ENCODE measurements at regions of chr11 and their contacts with region 1.

Region 1: DNA sequence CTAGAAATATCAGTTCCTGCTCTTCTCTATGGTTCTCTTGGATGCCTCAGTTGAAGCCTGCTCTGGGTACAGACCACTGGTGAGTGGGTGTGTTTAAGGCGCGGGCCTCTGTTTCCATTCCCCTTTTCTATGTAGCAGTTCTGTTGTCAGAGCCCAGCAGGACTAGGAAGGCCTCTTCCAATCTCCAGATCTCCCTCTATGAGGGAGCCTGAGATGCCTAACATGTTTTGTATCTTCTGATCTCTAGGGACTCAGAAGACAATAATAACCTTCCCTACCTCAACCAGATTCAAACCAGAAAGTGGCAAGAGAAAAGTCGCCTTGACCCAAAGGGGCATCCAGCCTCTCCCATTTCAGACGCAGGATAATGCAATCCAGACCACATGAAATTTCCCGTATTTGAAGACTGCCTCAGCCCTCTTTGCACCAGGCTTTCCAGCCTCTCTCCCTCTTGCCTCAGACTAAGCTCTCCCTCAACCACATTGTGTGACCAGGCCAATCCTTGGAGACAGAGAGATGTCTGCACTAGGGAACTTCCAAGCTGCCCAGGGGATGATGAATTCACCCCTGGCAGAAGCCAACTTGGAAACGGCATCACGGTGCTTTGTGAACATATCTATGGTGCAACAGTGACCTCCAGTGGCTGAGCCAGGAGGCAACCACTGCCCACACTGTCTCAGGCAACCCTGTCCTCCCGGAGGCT is 150.1 kb upstream of the UBASH3B start:
- DNase-seq: peak; percentile 83
- H3K4me3 Mint-ChIP-seq: no peak overlapping the region
- H3K27ac Mint-ChIP-seq: no peak overlapping the region
- H3K4me1 Mint-ChIP-seq: peaks cover 2% of the 10 kb centered on the region
- H3K27me3 Mint-ChIP-seq: peaks cover 16% of the 10 kb centered on the region

Region 2: GRCh38 chr11:122202951-122203456 is 302.5 kb before region 1 on chr11:
- intact Hi-C with region 1: no loop called
- DNase-seq: peak; percentile 80
- H3K4me3 Mint-ChIP-seq: no peak overlapping the region
- H3K27ac Mint-ChIP-seq: no peak overlapping the region
- H3K4me1 Mint-ChIP-seq: peaks cover 3% of the 10 kb centered on the region
- H3K27me3 Mint-ChIP-seq: peaks cover 16% of the 10 kb centered on the region

Region 3: DNA sequence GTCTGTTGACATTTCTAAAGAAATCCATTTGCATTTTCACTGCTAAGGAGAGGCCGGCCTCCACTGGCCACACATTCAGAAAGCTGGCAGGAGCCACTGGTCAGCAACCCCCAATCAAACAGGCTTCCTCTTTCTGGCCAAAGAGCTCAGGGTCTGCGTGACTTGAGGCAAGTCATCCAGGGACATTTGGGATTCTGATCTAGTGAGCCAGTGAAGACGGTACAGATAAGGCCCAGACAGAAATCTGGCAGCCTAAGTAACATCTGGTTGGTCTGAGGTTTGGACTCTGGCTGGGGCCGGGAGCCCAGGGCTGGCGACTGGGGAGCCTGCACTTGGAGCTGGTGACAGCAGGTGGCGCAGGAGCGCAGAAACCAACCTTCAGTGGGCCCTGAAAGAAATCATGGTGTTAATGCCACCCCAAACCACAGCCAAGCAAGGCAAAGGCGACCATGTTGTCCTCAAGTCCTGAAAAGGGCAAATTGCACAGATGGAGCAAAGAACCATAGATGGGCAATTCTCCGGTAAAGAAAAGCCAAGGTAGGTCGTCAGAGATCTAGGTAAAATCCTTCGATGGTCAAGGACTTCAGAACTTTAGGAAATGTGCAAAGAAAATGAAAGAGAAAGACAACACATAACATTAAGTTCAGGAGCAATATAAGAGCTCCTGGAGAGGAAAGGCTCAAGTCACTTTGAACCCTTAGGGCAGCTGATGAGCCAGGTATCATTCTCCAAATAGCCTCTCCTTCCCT is 290.0 kb before region 1 on chr11:
- intact Hi-C with region 1: loop called (anchors 1 kb)
- DNase-seq: peak; percentile 73
- H3K4me3 Mint-ChIP-seq: no peak overlapping the region
- H3K27ac Mint-ChIP-seq: no peak overlapping the region
- H3K4me1 Mint-ChIP-seq: no peaks in the 10 kb centered on the region
- H3K27me3 Mint-ChIP-seq: no peaks in the 10 kb centered on the region

Region 4: DNA sequence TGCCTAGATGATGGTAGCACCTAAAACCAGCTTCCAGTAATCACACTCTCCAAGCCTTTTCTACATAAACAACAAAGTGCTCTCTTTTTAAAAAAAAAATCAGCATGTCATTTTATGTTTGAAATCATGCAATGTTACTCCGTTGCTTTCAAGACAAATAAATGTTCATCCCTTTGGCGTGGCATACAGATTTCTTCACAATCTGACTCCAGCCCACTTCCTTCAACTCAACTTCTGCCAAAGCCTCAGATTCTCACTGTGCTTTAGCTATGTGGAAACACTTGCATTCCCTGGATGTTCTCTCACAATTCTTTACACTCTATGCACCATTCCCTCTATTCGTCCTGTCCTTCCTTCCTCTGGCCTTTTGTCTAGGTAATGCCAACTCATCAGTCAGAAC is 183.1 kb before region 1 on chr11:
- intact Hi-C with region 1: no loop called
- DNase-seq: no peak
- H3K4me3 Mint-ChIP-seq: no peak overlapping the region
- H3K27ac Mint-ChIP-seq: no peak overlapping the region
- H3K4me1 Mint-ChIP-seq: no peaks in the 10 kb centered on the region
- H3K27me3 Mint-ChIP-seq: no peaks in the 10 kb centered on the region

Region 5: DNA sequence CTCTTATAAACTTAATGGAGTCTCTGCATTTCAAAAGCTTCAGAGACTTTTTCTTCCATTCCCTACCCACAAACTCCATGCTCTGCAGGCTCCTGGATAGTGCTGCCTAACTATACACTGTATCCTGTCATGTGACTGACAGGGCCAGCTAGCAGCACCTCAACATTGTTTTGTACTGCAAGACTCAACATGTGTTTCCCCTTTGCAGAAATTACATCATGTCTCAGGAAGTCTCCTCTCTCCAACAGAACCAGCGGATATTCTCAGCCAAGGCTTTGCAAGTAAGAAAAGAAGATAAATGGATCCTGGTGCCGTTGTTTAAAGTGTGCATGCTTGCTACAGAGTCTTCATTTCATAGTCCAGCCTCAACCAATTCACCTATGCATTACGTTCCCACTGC is 13.9 kb before region 1 on chr11:
- intact Hi-C with region 1: no loop called
- DNase-seq: no peak
- H3K4me3 Mint-ChIP-seq: no peak overlapping the region
- H3K27ac Mint-ChIP-seq: no peak overlapping the region
- H3K4me1 Mint-ChIP-seq: no peaks in the 10 kb centered on the region
- H3K27me3 Mint-ChIP-seq: no peaks in the 10 kb centered on the region

Measured in activated CD4-positive, alpha-beta T cell treated with anti-CD3 and anti-CD28 coated beads, Interleukin-2, amount 10 ng/mL, durations not matched to agents 24 days and 14 days (primary cell).